IMR-90 (cell line): ENCODE measurements at regions of chrX and their contacts with region 1.

Region 1: DNA sequence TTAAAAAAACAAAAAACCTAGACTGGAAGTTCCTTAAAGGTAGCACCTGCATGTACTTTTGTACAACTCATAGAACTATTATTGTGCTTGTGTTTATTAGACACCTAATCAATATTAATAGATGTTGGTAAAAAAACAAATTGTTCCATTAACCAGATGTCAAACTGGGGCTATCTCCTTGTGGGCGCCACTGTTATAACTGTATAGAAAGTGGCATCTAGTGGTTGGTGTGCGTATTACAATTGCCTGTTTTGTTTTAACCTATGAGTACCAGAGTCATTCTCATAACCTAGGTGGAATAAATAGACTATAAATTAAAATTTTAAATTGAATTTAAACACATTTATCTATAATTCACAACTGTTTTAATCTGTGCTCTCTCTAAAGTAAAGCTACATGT is 97.4 kb downstream of the COL4A5 start:
- DNase-seq: peak; percentile 38
- ATAC-seq: peak; percentile 83
- H3K4me3 ChIP-seq: no peak overlapping the region
- H3K27ac ChIP-seq: no peak overlapping the region
- H3K4me1 ChIP-seq: no peaks in the 10 kb centered on the region
- H3K27me3 ChIP-seq: no peaks in the 10 kb centered on the region
- CTCF ChIP-seq: peak; percentile 67
- POLR2A ChIP-seq: no peak
- RAD21 ChIP-seq: peak; percentile 72

Region 2: GRCh38 chrX:107374132-107374531 is 1162.9 kb before region 1 on chrX:
- CTCF ChIA-PET with region 1: no interaction called
- POLR2A ChIA-PET with region 1: no interaction called
- dilution Hi-C with region 1: no loop called
- in situ Hi-C with region 1: no loop called
- intact Hi-C with region 1: no loop called
- DNase-seq: no peak
- ATAC-seq: no peak
- H3K4me3 ChIP-seq: no peak overlapping the region
- H3K27ac ChIP-seq: no peak overlapping the region
- H3K4me1 ChIP-seq: no peaks in the 10 kb centered on the region
- H3K27me3 ChIP-seq: peaks cover 1% of the 10 kb centered on the region; the same call in 1 of the 2 replicates
- CTCF ChIP-seq: no peak
- POLR2A ChIP-seq: no peak
- RAD21 ChIP-seq: no peak

Region 3: GRCh38 chrX:108199691-108200090 is 337.3 kb before region 1 on chrX:
- CTCF ChIA-PET with region 1: no interaction called
- POLR2A ChIA-PET with region 1: no interaction called
- dilution Hi-C with region 1: no loop called
- in situ Hi-C with region 1: no loop called
- intact Hi-C with region 1: loop called (anchors 1 kb)
- DNase-seq: peak; percentile 22
- ATAC-seq: no peak; the same call in 1 of the 2 replicates
- H3K4me3 ChIP-seq: no peak overlapping the region
- H3K27ac ChIP-seq: no peak overlapping the region
- H3K4me1 ChIP-seq: no peaks in the 10 kb centered on the region
- H3K27me3 ChIP-seq: peaks cover 17% of the 10 kb centered on the region
- CTCF ChIP-seq: peak; percentile 55
- POLR2A ChIP-seq: no peak
- RAD21 ChIP-seq: peak; percentile 54

Region 4: DNA sequence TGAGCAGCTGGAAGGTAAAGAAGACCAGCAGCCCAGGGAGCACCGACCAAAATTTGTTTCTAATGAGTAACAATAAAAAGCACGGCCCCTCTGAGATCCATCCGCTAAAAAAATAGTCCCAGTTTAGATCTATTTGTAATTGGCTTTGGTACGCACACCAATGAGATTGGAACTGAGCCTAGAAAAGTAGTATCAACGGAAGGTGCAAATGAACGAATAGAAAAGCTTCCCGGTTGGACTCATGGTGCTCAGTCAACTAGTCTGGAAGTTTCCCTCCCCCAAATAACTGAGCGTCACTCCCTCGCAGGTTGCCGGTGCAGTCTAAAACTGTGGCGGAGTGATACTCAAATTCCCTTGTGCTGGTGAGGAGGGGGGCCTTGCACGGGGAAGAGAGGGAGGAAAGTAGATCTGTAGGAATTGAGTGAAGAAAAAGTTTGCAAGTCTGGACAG is 97.5 kb before region 1 on chrX and contains the start of gene COL4A5:
- CTCF ChIA-PET with region 1: no interaction called
- POLR2A ChIA-PET with region 1: no interaction called
- dilution Hi-C with region 1: no loop called
- in situ Hi-C with region 1: no loop called
- intact Hi-C with region 1: loop called (anchors 5 kb)
- DNase-seq: peak; percentile 80
- ATAC-seq: peak; percentile 73
- H3K4me3 ChIP-seq: peak within 1 kb of the TSS; percentile 89
- H3K27ac ChIP-seq: peak within 1 kb of the TSS; percentile 83
- H3K4me1 ChIP-seq: no peaks in the 10 kb centered on the region
- H3K27me3 ChIP-seq: peaks cover 5% of the 10 kb centered on the region
- CTCF ChIP-seq: no peak
- POLR2A ChIP-seq: no peak
- RAD21 ChIP-seq: no peak
- total RNA-seq, gene COL4A5: 15.0 and 16.3 TPM in 2 replicates